ENCODE measurements at regions of chr18 and their contacts with region 1.

Region 1: GRCh38 chr18:33231474-33232317 is 208.8 kb downstream of the CCDC178 start:
- H3K4me3 ChIP-seq: no peak overlapping the region
- H3K27ac ChIP-seq: no peak overlapping the region
- H3K4me1 ChIP-seq: no peaks in the 10 kb centered on the region
- CTCF ChIP-seq: peak; percentile 64

Region 2: GRCh38 chr18:32958746-32959145 is 272.9 kb before region 1 on chr18:
- CTCF ChIA-PET with region 1: no interaction called
- POLR2A ChIA-PET with region 1: no interaction called
- H3K4me3 ChIP-seq: no peak overlapping the region
- H3K27ac ChIP-seq: no peak overlapping the region
- H3K4me1 ChIP-seq: no peaks in the 10 kb centered on the region
- CTCF ChIP-seq: no peak

Region 3: DNA sequence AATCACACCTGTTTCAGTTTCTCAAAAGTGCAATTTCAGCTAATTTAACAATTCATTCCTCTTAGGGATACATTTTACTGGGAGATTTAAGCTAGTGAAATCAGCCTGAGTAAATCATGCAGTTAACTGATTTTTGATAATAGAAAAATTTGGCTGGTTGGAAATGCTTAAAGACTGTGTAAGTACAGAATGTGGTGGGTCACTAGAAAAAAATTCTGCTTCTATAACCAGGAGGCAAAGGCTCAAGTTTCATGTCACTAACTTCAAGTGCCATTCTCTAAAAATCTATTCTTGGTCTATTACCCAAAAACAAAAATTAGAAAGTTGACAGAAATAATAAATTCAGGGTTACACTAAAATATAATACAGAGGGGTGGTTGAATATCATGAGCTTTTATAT is 62.5 kb before region 1 on chr18:
- CTCF ChIA-PET with region 1: no interaction called
- POLR2A ChIA-PET with region 1: no interaction called
- H3K4me3 ChIP-seq: no peak overlapping the region
- H3K27ac ChIP-seq: no peak overlapping the region
- H3K4me1 ChIP-seq: no peaks in the 10 kb centered on the region
- CTCF ChIP-seq: no peak

Region 4: DNA sequence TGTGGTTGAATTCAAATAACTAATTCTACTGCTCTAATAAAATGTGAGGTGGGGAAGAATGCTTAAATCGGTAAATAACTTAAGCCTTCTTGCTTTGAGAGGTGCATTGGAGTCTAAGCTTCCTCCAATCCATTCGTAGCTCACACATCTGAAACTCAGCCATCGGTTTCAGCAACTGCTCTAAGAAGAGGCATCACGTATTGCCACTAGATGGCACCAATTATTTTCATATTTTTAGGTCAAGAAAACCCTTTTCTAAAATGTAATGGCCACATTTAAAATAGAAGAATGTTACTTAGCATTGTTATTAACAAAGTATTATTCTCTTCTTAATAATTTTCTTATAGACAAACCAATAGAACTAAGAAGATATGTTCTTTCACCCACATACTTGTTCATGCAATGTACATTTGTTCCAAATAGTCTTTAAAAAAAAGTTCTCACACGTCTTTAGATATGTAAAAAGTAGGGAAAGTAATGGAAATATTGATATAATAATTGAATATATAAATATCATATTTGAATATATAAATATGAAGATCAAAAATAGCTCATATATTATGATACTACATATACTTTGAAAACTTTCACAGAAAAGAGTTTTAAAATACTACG is 21.0 kb before region 1 on chr18:
- CTCF ChIA-PET with region 1: interaction called, 51 read pairs
- POLR2A ChIA-PET with region 1: no interaction called
- H3K4me3 ChIP-seq: no peak overlapping the region
- H3K27ac ChIP-seq: no peak overlapping the region
- H3K4me1 ChIP-seq: no peaks in the 10 kb centered on the region
- CTCF ChIP-seq: no peak

Region 5: DNA sequence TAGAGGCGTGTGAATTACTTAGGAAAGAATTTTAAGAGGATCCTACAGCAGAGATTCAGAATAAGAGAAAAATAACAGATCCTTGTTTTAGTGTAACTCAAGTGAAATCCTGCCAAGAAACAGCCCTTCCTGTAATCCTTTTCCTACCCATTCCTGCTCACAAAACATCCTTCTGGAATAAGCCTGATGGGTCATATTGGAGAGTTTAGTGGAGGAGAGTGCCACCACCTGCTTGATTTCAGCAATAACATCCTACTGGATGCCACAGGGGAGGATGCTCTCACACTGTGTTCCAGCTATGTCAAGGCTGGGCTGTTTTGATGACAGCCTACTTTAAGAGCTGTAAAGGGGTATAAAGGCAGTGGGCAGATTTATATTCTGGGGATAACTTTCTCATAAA is 263.6 kb after region 1 on chr18:
- CTCF ChIA-PET with region 1: interaction called, 28 read pairs
- POLR2A ChIA-PET with region 1: no interaction called
- H3K4me3 ChIP-seq: no peak overlapping the region
- H3K27ac ChIP-seq: no peak overlapping the region
- H3K4me1 ChIP-seq: no peaks in the 10 kb centered on the region
- CTCF ChIP-seq: peak; percentile 63; the same call in 1 of the 2 replicates